ENCODE measurements at regions of chr17 and their contacts with region 1.

Region 1: DNA sequence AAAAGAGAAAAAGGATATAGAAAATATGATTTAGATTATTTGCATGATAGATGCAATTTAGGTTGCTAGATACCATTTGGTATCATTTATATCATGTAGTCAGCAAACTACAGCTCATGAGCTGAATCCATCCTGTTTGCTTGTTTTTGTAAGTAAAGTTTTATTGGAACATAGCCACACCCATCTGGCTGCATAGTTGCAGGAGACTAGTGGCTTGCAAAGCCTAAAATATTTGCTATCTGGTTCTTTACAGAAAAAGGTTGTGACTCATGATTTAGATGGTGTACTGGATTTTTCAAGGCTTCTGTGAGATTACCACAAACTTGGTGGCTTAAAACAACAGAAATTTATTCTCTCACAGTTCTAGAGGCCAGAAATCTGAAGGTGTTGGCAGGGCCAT is 49.9 kb downstream of the MAP2K4 start:
- DNase-seq: peak; percentile 43
- H3K4me3 ChIP-seq: no peak overlapping the region
- H3K27me3 ChIP-seq: no peaks in the 10 kb centered on the region
- CTCF ChIP-seq: no peak

Region 2: DNA sequence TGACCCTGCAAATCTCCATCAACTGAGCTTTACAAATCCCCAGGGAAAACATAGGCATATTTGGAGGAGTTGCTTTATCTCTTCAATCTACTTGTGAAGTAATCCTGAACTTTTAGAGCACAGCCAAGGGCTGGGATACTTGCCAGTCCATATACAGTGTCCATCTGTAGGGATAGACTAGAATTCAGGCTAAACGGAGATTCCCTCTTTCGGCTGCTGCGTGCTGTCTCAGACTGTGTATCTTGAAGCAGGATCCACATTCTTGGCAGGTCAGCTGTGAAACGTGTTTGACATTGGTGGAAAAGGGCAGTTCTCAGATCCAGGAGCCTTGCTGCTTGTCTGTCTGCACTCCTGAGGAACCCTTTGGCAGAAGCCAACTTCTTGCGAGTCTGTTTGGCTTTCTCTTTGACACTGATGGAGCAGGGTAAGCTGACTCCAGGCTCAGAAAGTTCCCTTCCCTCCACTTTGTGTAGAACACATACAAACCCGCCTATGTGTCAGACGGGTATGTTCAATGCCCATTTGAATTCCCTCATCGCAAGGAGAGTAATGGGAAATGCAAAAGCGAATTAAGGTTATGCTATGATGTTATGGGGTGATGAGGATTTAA is 171.9 kb after region 1 on chr17:
- CTCF ChIA-PET with region 1: no interaction called
- POLR2A ChIA-PET with region 1: interaction called, 15 read pairs
- DNase-seq: no peak
- H3K4me3 ChIP-seq: no peak overlapping the region
- H3K27me3 ChIP-seq: no peaks in the 10 kb centered on the region
- CTCF ChIP-seq: no peak